ENCODE measurements at regions of chr10 and their contacts with region 1.

Region 1: GRCh38 chr10:18238870-18239485 is 98.8 kb downstream of the CACNB2 start:
- DNase-seq: no peak
- ATAC-seq: no peak
- H3K4me3 Mint-ChIP-seq: no peak overlapping the region
- H3K27ac Mint-ChIP-seq: no peak overlapping the region
- H3K4me1 Mint-ChIP-seq: no peaks in the 10 kb centered on the region
- H3K27me3 Mint-ChIP-seq: peaks cover 9% of the 10 kb centered on the region

Region 2: GRCh38 chr10:17737027-17737965 is 501.7 kb before region 1 on chr10:
- CTCF ChIA-PET with region 1: interaction called, 3 read pairs
- POLR2A ChIA-PET with region 1: no interaction called
- intact Hi-C with region 1: loop called in 1 of 2 experiments (anchors 5 kb)
- DNase-seq: no peak
- ATAC-seq: no peak
- H3K4me3 Mint-ChIP-seq: no peak overlapping the region
- H3K27ac Mint-ChIP-seq: no peak overlapping the region
- H3K4me1 Mint-ChIP-seq: peaks cover 2% of the 10 kb centered on the region
- H3K27me3 Mint-ChIP-seq: no peaks in the 10 kb centered on the region

Region 3: GRCh38 chr10:17847585-17848296 is 391.2 kb before region 1 on chr10:
- CTCF ChIA-PET with region 1: no interaction called
- POLR2A ChIA-PET with region 1: no interaction called
- intact Hi-C with region 1: loop called in 1 of 2 experiments (anchors 2 kb)
- DNase-seq: no peak
- ATAC-seq: peak; percentile 19
- H3K4me3 Mint-ChIP-seq: no peak overlapping the region
- H3K27ac Mint-ChIP-seq: no peak overlapping the region
- H3K4me1 Mint-ChIP-seq: no peaks in the 10 kb centered on the region
- H3K27me3 Mint-ChIP-seq: peaks cover 3% of the 10 kb centered on the region

Region 4: DNA sequence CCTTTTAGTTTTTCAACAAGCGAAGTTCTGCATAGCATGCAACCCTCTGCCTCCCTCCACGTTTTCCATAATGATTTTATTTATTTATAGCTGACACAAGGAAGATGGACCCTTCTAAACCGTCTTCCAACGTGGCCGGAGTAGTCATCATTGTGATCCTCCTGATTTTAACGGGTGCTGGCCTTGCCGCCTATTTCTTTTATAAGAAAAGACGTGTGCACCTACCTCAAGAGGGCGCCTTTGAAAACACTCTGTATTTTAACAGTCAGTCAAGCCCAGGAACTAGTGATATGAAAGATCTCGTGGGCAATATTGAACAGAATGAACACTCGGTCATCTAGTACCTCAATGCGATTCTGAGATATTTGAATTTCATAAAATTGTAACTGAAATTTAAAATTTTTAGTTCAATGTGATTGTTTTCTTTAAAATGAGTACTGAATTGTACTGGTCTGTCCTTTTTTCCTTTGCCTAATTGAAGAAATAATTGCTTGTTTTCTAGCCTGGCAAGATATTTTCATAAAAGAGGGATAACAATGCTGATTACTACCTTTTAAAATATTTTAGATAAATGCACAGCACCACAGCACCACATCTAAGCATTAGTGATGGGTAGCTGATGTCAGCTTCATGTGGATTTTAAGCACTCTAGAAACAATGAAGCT is 328.7 kb before region 1 on chr10:
- CTCF ChIA-PET with region 1: no interaction called
- POLR2A ChIA-PET with region 1: no interaction called
- intact Hi-C with region 1: loop called in 1 of 2 experiments (anchors 2 kb)
- DNase-seq: peak; percentile 26
- ATAC-seq: no peak
- H3K4me3 Mint-ChIP-seq: no peak overlapping the region
- H3K27ac Mint-ChIP-seq: no peak overlapping the region
- H3K4me1 Mint-ChIP-seq: no peaks in the 10 kb centered on the region
- H3K27me3 Mint-ChIP-seq: peaks cover 2% of the 10 kb centered on the region

Region 5: DNA sequence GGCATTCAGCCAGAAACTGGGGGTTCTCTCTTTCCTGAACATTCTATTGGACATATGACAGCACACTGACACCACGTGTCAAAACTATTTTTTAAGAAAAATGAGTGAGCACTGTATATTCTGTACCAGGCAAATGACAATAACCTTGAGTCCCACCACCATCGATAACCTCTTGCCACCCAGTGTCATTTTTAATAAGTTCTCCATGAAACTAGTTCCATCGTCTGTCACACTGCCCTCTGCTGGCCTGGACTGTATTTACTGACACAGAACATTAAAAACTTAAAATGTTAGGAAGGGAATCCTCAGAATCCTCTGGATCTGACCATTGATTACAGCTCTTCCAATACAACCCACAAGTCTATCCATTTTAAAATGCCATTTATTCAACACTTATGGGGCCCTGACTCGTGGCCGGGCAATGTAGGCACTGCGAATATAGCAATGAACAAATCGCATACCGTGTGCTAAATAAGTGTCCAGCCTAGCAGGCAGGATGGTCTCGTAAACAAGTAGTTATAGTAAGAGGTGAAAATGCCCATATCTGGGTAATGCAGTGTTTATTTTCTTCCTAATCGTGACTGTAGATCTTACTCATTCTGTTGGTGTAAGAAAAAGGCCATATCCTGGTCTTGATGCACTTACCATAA is 134.6 kb before region 1 on chr10:
- CTCF ChIA-PET with region 1: no interaction called
- POLR2A ChIA-PET with region 1: no interaction called
- intact Hi-C with region 1: loop called in 1 of 2 experiments (anchors 5 kb)
- DNase-seq: peak; percentile 74
- ATAC-seq: no peak
- H3K4me3 Mint-ChIP-seq: no peak overlapping the region
- H3K27ac Mint-ChIP-seq: no peak overlapping the region
- H3K4me1 Mint-ChIP-seq: no peaks in the 10 kb centered on the region
- H3K27me3 Mint-ChIP-seq: peaks cover 3% of the 10 kb centered on the region

Region 6: GRCh38 chr10:18144928-18145327 is 94.0 kb before region 1 on chr10:
- CTCF ChIA-PET with region 1: no interaction called
- POLR2A ChIA-PET with region 1: no interaction called
- intact Hi-C with region 1: no loop called
- DNase-seq: no peak
- ATAC-seq: no peak
- H3K4me3 Mint-ChIP-seq: no peak overlapping the region
- H3K27ac Mint-ChIP-seq: no peak overlapping the region
- H3K4me1 Mint-ChIP-seq: peaks cover 3% of the 10 kb centered on the region
- H3K27me3 Mint-ChIP-seq: peaks cover 22% of the 10 kb centered on the region

Region 7: GRCh38 chr10:18185621-18186020 is 53.4 kb before region 1 on chr10:
- CTCF ChIA-PET with region 1: no interaction called
- POLR2A ChIA-PET with region 1: no interaction called
- intact Hi-C with region 1: no loop called
- DNase-seq: no peak
- ATAC-seq: no peak
- H3K4me3 Mint-ChIP-seq: no peak overlapping the region
- H3K27ac Mint-ChIP-seq: no peak overlapping the region
- H3K4me1 Mint-ChIP-seq: no peaks in the 10 kb centered on the region
- H3K27me3 Mint-ChIP-seq: peaks cover 4% of the 10 kb centered on the region

Region 8: DNA sequence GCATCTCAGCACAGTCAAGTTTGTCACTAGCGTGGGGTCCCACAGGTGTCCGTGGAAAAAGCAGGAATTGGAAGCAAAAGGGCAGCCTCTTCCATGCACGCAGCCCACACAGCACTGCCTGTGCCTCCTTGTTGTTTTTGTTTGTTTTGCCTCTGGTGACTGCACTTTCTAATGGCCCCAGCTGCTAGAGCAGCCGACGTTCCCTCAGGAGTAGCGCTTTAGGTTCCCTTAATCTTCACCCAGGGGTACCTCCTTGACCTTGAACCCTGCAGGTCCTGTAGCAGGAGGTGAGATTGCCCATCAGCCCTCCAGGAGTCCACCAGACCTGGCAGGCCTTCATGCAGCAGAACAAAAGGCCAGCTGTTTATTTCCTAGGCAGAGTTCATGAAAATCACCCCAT is 111.4 kb after region 1 on chr10:
- CTCF ChIA-PET with region 1: no interaction called
- POLR2A ChIA-PET with region 1: no interaction called
- intact Hi-C with region 1: no loop called
- DNase-seq: no peak
- ATAC-seq: no peak
- H3K4me3 Mint-ChIP-seq: no peak overlapping the region
- H3K27ac Mint-ChIP-seq: no peak overlapping the region
- H3K4me1 Mint-ChIP-seq: no peaks in the 10 kb centered on the region
- H3K27me3 Mint-ChIP-seq: peaks cover 2% of the 10 kb centered on the region

Measured in activated CD4-positive, alpha-beta T cell treated with anti-CD3 and anti-CD28 coated beads for 36 hours (primary cell).